ENCODE measurements at regions of chr1 and their contacts with region 1.

Region 1: GRCh38 chr1:160629286-160630210 is 17.3 kb downstream of the SLAMF1 start:
- DNase-seq: no peak
- ATAC-seq: peak; percentile 31; the same call in 2 of the 3 replicates
- H3K4me3 ChIP-seq: no peak overlapping the region
- H3K27ac ChIP-seq: no peak overlapping the region
- H3K4me1 ChIP-seq: peaks cover 15 to 48% of the 10 kb centered on the region in 2 experiments; a peak in 4 of 5 replicates
- H3K27me3 ChIP-seq: no peaks in the 10 kb centered on the region
- CTCF ChIP-seq: no peak
- EP300 ChIP-seq: no peak
- POLR2A ChIP-seq: no peak
- RAD21 ChIP-seq: no peak

Region 2: DNA sequence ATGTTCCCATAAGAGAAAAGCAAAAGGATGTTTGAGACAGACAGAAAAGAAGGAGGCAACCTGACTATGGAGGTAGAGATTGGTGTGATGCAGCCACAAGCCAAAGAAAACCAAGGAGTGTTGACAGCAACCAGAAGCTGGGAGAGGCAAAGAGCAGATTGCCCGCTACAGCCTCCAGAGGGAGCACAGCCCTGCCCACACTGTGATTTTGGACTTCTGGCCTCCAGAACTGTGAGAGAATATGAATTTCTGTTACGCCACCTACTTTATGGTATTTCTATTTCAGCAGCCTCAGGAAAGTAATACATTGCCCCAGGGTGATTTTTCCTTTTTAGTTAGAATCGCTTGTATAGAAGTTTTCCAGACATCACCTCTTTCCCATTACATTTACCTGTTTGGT is 134.9 kb before region 1 on chr1:
- CTCF ChIA-PET with region 1: no interaction called
- POLR2A ChIA-PET with region 1: no interaction called
- in situ Hi-C with region 1: no loop called
- intact Hi-C with region 1: no loop called
- DNase-seq: peak in 1 of 4 experiments; percentile 42
- ATAC-seq: peak; percentile 82
- H3K4me3 ChIP-seq: no peak overlapping the region
- H3K27ac ChIP-seq: no peak overlapping the region
- H3K4me1 ChIP-seq: 0 out of 5 replicates have a peak, but pooled peaks cover 0 to 4% of the 10 kb centered on the region in 2 experiments
- H3K27me3 ChIP-seq: no peaks in the 10 kb centered on the region
- CTCF ChIP-seq: peak; percentile 37 to 40 (median 39); a peak in 5 of 6 replicates
- EP300 ChIP-seq: no peak
- POLR2A ChIP-seq: no peak
- RAD21 ChIP-seq: peak in 1 of 2 experiments; percentile 59; a peak in 2 of 4 replicates

Region 3: DNA sequence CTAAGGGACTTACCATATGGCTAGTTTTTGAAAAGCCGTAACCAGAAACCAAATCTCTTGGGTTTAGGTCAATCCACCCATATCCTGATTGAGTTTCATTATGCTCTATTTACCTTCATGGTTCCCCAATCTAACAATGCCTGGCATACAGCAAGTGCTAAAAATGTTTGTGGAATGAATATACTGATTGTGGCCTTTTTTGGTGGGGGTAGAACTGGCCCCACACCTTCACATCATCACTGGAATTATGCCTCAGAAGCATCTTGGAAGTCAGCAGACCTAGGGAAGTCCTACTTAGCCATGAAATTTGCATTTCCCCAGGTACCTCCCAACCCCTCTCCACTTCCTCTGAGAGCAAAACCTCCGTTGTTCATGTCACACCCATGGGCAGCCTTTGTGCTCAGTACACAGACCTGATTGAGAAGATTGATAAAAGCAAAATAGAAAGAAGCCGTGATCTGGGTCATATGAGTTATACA is 35.1 kb after region 1 on chr1:
- CTCF ChIA-PET with region 1: no interaction called
- POLR2A ChIA-PET with region 1: interaction called, 3 read pairs
- in situ Hi-C with region 1: no loop called
- intact Hi-C with region 1: loop called (anchors 5 kb)
- DNase-seq: no peak
- ATAC-seq: peak; percentile 31
- H3K4me3 ChIP-seq: no peak overlapping the region
- H3K27ac ChIP-seq: peak overlapping the region; percentile 84; the same call in 2 of the 3 replicates
- H3K4me1 ChIP-seq: peaks cover 3 to 26% of the 10 kb centered on the region in 2 experiments; a peak in 4 of 5 replicates
- H3K27me3 ChIP-seq: no peaks in the 10 kb centered on the region
- CTCF ChIP-seq: no peak
- EP300 ChIP-seq: no peak
- POLR2A ChIP-seq: no peak
- RAD21 ChIP-seq: no peak

Region 4: DNA sequence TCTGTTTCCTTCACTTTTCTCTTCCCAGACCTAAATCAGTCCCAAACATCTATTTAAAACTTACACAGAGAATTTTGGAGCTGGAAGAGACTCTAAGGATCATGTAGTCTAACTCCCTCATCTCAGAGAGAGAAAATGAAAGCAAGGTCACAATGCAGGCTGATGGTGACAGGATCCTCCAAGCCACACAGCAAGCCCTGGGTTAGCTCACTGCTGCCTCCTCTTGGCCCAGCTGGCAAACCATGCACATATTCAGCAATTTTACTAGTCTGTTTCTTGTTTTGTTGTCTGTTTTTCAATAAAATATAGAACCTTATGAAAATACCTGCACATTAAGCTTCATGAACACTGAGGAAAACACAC is 138.7 kb after region 1 on chr1:
- CTCF ChIA-PET with region 1: no interaction called
- POLR2A ChIA-PET with region 1: no interaction called
- in situ Hi-C with region 1: no loop called
- intact Hi-C with region 1: loop called (anchors 10 kb)
- DNase-seq: peak in 3 of 4 experiments; percentile 19 to 64 (median 49)
- ATAC-seq: peak; percentile 96
- H3K4me3 ChIP-seq: no peak overlapping the region
- H3K27ac ChIP-seq: no peak overlapping the region
- H3K4me1 ChIP-seq: peaks cover 0 to 4% of the 10 kb centered on the region in 2 experiments; a peak in 1 of 5 replicates
- H3K27me3 ChIP-seq: peaks cover 0 to 2% of the 10 kb centered on the region in 2 experiments; a peak in 2 of 5 replicates
- CTCF ChIP-seq: peak; percentile 77 to 90 (median 86)
- EP300 ChIP-seq: no peak
- POLR2A ChIP-seq: no peak
- RAD21 ChIP-seq: peak; percentile 90 to 92

Region 5: DNA sequence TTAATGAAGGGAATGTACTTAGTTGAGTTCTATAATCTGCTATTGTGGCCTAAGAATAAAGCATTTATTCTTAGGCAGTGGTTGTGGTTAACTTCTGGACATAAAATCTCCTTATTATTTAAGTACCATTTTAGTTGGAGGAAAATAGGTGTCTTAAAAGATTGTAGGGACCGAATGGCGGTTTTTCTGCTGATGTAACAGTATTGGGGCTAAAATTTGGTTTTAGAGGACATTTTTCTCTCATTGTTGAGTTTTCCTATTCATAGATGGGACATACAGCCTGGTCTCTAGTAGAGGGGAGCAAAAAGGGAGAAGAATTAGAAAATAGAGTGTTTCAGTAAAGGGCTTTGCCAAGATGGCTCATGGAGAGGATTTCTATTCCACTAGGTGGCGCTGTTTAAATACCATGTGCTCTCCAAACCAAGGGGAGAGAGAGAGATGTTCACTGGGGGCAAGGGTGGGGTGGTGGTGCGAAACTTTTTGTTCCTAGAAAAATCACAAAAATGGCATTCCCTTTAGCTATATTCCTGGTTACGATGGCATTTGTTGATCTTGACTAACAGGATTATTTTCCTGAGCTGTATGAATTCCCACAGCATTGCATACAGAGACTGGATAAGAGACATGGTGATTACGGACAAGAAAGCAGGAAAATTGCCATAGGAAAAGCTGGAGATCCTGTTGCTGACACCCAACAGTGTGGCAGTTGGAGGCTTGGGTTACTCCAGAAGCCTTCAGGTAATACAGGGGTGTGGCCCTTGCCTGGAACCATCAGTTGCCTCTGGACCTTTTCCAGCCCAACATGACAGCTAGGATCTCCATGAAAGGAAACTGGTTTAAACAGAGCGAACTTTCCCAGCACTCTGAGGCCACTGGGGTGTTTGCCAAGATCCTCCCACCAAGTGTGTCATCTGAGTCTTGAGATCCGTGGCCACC is 857.5 kb after region 1 on chr1:
- CTCF ChIA-PET with region 1: no interaction called
- POLR2A ChIA-PET with region 1: no interaction called
- in situ Hi-C with region 1: no loop called
- intact Hi-C with region 1: no loop called
- DNase-seq: peak; percentile 75 to 88 (median 79)
- ATAC-seq: peak; percentile 93
- H3K4me3 ChIP-seq: peak overlapping the region; percentile 9; the same call in 1 of the 2 replicates
- H3K27ac ChIP-seq: peak overlapping the region; percentile 68
- H3K4me1 ChIP-seq: peaks cover 0 to 34% of the 10 kb centered on the region in 2 experiments
- H3K27me3 ChIP-seq: no peaks in the 10 kb centered on the region
- CTCF ChIP-seq: peak; percentile 72 to 93 (median 82)
- EP300 ChIP-seq: 0 out of 2 replicates have a peak, but pooled peaks have one; percentile 10
- POLR2A ChIP-seq: no peak
- RAD21 ChIP-seq: peak; percentile 91 to 97

Measured in K562 (cell line).